HEK293 (cell line): ENCODE measurements at regions of chr15 and their contacts with region 1.

Region 1: DNA sequence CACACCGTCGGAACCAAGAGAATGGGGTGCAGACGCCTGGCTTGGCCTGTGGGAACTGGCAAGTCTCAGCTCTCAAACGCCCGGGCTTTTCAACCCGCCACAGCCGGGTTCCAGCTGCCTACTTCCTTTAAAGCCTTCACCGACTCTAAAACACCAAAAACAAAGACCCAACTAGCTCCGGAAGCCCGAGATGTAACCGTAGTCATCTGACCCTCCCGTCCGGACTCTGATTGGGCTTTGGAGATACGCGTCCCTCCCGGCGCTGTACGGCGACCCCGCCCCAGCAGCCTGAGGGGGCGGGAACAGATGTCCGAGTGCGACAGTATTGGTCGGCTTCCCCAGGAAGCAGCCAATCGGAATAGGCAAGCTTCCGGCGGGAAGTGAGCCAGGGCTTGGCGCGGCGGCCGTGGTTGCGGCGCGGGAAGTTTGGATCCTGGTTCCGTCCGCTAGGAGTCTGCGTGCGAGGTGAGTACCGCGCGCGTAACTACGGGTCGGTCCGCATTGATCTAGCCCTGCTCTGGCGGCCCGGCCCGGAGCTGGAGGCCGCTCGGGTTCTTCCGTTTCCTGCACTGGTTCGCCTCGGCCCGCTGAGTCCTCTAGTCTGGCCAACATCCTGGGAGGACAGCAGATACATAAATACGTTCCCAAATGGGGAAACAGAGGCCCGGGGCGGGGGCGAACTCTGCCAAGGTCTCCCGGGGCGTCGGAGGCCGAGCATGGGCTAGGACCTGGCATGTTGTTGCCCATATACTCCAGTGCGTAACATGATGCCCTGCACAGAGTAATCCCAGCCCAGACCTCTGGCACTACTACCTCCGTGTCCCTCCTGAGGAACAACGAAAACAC is at the start of gene BLM:
- H3K4me3 ChIP-seq: peak within 1 kb of the TSS; percentile 88
- H3K27ac ChIP-seq: peak within 1 kb of the TSS; percentile 81
- H3K4me1 ChIP-seq: no peaks in the 10 kb centered on the region; the same call in 1 of the 2 replicates
- CTCF ChIP-seq: peak; percentile 90

Region 2: DNA sequence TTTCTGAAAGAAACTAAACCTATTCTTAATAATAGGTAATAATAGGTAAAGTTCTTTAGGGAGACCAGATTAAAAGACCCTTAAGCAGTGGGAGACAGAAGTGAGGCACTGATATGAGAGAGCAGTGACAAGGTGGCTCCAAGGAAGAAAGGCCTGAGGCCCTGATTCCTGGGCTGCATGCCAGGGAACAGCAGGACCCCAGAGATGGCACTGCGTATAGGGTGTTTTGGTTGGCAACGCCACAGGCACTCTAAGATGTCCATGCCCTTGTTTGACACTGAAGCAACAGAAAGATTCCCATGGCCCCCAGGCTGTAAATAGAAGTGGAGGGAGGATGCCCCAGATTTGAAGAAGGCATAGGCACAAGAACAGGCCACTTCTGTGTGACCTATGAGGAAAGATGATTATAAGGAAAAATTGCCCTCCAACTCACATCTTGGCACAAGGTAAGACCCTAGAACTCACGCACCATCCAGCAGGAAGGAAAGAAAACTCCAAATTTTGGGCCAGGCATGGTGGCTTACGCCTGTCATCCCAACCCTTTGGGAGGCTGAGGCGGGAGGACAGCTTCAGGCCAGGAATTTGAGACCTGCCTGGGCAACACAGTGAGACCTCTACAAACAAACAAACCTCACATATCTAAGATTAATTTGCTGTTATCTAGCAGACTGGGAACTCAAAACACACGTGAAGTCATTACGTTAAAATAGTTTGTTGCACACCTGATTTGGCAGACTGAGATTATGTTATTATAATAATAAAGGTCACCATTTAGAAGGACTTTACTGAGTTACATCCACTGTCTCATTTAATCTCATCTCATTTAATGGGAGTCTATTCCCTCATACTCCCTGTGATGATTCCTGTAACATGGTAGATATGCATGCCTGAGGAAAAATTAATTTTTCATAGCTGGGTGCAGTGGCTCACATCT is 10.5 kb before region 1 on chr15:
- CTCF ChIA-PET with region 1: interaction called, 3 read pairs
- POLR2A ChIA-PET with region 1: interaction called, 10 read pairs
- H3K4me3 ChIP-seq: no peak overlapping the region
- H3K27ac ChIP-seq: peak overlapping the region; percentile 90
- H3K4me1 ChIP-seq: peaks cover 35% of the 10 kb centered on the region
- CTCF ChIP-seq: no peak

Region 3: DNA sequence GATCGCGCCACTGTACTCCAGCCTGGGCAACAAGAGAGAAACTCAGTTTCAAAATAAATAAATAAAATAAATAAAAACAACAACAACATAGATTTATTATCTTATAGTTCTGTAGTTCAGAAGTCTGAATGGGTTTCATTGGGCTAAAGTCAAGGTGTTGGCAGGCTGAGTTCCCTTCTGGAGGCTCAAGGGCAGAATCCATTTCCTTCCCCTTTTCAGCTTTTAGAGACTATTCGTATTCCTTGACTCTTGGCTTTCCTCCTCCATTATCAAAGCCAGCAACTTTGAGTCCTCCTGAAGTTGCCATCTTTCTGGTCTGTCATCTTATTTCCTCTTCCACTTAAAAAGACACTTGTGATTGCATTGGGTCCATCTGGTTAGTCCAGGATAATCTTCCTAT is 12.1 kb after region 1 on chr15:
- CTCF ChIA-PET with region 1: interaction called, 4 read pairs
- POLR2A ChIA-PET with region 1: interaction called, 10 read pairs
- H3K4me3 ChIP-seq: no peak overlapping the region
- H3K27ac ChIP-seq: no peak overlapping the region
- H3K4me1 ChIP-seq: no peaks in the 10 kb centered on the region
- CTCF ChIP-seq: no peak

Region 4: GRCh38 chr15:90869601-90870353 is 152.6 kb after region 1 on chr15:
- CTCF ChIA-PET with region 1: interaction called, 3 read pairs
- POLR2A ChIA-PET with region 1: interaction called, 16 read pairs
- H3K4me3 ChIP-seq: no peak overlapping the region
- H3K27ac ChIP-seq: peak overlapping the region; percentile 96
- H3K4me1 ChIP-seq: peaks cover 54% of the 10 kb centered on the region
- CTCF ChIP-seq: no peak

Region 5: GRCh38 chr15:90902040-90902839 is 185.0 kb after region 1 on chr15:
- CTCF ChIA-PET with region 1: interaction called, 3 read pairs
- POLR2A ChIA-PET with region 1: interaction called, 14 read pairs
- H3K4me3 ChIP-seq: peak overlapping the region; percentile 74
- H3K27ac ChIP-seq: peak overlapping the region; percentile 98
- H3K4me1 ChIP-seq: peaks cover 13% of the 10 kb centered on the region
- CTCF ChIP-seq: peak; percentile 97